ENCODE measurements at regions of chr4 and their contacts with region 1.

Region 1: DNA sequence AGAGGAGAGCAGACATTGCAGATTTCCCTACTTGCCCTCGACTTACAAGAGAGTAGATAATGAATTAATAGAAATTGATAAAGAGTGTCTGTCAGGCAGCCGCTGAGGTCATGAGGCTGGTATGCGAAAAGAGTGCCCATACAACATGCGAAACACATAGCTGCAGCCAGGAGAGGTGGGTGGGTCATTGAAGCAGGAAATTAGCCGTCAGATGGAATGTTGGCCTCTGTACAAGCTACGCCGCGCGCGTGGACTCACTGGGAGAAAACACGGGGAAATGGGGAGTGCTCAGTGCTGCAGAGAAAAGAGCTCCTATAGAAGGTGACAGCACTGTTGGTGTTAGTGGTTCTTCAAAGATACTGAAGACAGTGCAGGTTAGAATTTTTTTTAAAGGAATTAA is 125.1 kb downstream of the RAPGEF2 start:
- DNase-seq: peak; percentile 76 to 86
- H3K4me3 ChIP-seq: peak overlapping the region; percentile 8; the same call in 1 of the 2 replicates
- H3K4me3 Mint-ChIP-seq: peak overlapping the region; percentile 82
- H3K27ac Mint-ChIP-seq: peak overlapping the region; percentile 97
- H3K4me1 ChIP-seq: peaks cover 48% of the 10 kb centered on the region
- H3K4me1 Mint-ChIP-seq: peaks cover 28% of the 10 kb centered on the region
- H3K27me3 ChIP-seq: no peaks in the 10 kb centered on the region
- H3K27me3 Mint-ChIP-seq: no peaks in the 10 kb centered on the region
- CTCF ChIP-seq: no peak

Region 2: GRCh38 chr4:158722917-158723793 is 504.8 kb before region 1 on chr4 and contains the start of gene PPID:
- CTCF ChIA-PET with region 1: no interaction called
- POLR2A ChIA-PET with region 1: no interaction called
- intact Hi-C with region 1: loop called (anchors 2 kb)
- DNase-seq: peak; percentile 85 to 88
- H3K4me3 ChIP-seq: peak within 1 kb of the TSS; percentile 68
- H3K4me3 Mint-ChIP-seq: peak within 1 kb of the TSS; percentile 90
- H3K27ac Mint-ChIP-seq: peak within 1 kb of the TSS; percentile 95
- H3K4me1 ChIP-seq: peaks cover 6% of the 10 kb centered on the region
- H3K4me1 Mint-ChIP-seq: peaks cover 9% of the 10 kb centered on the region
- H3K27me3 ChIP-seq: no peaks in the 10 kb centered on the region
- H3K27me3 Mint-ChIP-seq: no peaks in the 10 kb centered on the region
- CTCF ChIP-seq: no peak
- total RNA-seq, gene PPID: 50.9 and 57.2 TPM in 2 replicates

Region 3: GRCh38 chr4:158991534-158992155 is 236.3 kb before region 1 on chr4:
- CTCF ChIA-PET with region 1: no interaction called
- POLR2A ChIA-PET with region 1: no interaction called
- intact Hi-C with region 1: no loop called
- DNase-seq: no peak
- H3K4me3 ChIP-seq: no peak overlapping the region
- H3K4me3 Mint-ChIP-seq: no peak overlapping the region
- H3K27ac Mint-ChIP-seq: no peak overlapping the region
- H3K4me1 ChIP-seq: no peaks in the 10 kb centered on the region
- H3K4me1 Mint-ChIP-seq: no peaks in the 10 kb centered on the region
- H3K27me3 ChIP-seq: no peaks in the 10 kb centered on the region
- H3K27me3 Mint-ChIP-seq: no peaks in the 10 kb centered on the region
- CTCF ChIP-seq: no peak

Region 4: DNA sequence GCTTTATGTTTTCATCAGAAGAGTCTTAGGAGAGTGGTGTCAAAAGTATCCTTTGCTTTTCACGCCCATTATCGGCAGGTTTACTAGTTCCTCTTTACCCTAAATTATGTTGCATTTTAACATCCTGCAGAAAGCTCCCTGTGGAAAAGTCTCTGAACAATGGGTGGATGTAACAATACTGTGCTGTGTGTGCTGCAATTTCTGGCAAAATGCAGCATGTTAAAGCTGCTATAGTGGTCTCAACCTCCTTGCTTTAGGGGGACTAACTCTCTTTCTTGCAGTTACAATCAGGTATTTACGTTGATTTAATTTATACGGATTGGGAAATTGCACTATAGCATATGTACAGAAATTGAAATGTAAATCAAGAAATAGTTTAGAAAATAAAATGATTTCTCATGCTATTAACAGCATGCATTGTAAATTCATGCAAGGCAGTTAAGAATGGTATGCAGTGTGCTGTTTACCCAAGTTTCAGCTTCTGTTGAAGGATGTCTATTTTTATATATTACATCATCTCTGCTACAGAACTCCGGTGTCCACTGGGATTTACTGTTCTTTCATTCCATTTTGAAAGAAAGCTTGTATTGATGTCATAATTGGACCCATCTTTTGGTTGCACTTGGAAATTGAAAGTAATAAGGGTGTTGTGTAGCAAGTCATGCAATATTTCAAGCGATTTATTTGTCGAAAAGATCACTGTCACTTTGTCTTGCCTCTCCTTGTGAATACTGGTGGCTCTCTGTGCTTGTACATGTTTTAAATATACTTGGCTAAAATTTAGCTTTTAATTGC is 20.6 kb after region 1 on chr4:
- CTCF ChIA-PET with region 1: no interaction called
- POLR2A ChIA-PET with region 1: no interaction called
- intact Hi-C with region 1: loop called (anchors 1 kb)
- DNase-seq: peak in 1 of 2 experiments; percentile 16
- H3K4me3 ChIP-seq: no peak overlapping the region
- H3K4me3 Mint-ChIP-seq: no peak overlapping the region
- H3K27ac Mint-ChIP-seq: peak overlapping the region; percentile 36
- H3K4me1 ChIP-seq: peaks cover 8% of the 10 kb centered on the region
- H3K4me1 Mint-ChIP-seq: peaks cover 11% of the 10 kb centered on the region
- H3K27me3 ChIP-seq: no peaks in the 10 kb centered on the region
- H3K27me3 Mint-ChIP-seq: no peaks in the 10 kb centered on the region
- CTCF ChIP-seq: no peak

Region 5: DNA sequence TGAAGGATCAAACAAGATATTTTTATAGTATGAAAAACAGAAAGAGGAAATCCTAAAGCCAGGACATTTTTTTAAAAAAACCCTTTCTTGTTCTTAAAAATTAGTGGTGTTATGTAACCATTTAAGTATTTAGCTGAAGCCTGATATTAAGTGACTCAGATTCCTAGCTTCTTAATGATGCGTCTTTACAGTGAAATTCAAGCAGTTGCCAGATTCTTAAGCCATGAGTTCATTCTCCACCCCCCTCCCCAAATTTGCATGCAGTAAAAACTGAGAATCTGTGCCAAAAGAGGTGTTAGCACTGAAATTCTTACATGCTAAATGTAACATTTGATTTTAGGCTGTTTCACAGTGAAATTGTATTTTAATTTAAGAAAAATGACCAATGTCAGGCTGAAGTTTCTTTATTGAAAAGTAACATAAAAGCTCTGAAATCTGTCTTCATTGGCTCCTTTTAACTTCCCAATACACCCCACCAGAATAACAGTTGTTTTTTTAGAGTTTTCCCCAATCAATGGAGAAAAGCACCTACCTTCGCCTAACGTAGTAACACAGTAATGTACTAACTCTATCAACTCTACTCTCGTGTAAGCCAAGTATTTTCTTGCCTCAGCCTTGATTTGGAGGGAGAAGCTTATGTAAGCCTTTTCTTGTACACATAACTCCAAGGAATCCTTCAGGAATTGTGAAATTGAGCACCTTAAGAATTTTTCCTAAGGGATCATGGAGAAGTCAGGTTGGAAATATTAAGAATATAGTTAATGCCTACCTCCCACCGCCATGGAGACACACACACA is 55.9 kb after region 1 on chr4:
- CTCF ChIA-PET with region 1: no interaction called
- POLR2A ChIA-PET with region 1: interaction called, 3 read pairs
- intact Hi-C with region 1: loop called (anchors 5 kb)
- DNase-seq: no peak
- H3K4me3 ChIP-seq: no peak overlapping the region
- H3K4me3 Mint-ChIP-seq: no peak overlapping the region
- H3K27ac Mint-ChIP-seq: no peak overlapping the region
- H3K4me1 ChIP-seq: peaks cover 43% of the 10 kb centered on the region
- H3K4me1 Mint-ChIP-seq: peaks cover 5% of the 10 kb centered on the region
- H3K27me3 ChIP-seq: no peaks in the 10 kb centered on the region
- H3K27me3 Mint-ChIP-seq: no peaks in the 10 kb centered on the region
- CTCF ChIP-seq: no peak

Region 6: DNA sequence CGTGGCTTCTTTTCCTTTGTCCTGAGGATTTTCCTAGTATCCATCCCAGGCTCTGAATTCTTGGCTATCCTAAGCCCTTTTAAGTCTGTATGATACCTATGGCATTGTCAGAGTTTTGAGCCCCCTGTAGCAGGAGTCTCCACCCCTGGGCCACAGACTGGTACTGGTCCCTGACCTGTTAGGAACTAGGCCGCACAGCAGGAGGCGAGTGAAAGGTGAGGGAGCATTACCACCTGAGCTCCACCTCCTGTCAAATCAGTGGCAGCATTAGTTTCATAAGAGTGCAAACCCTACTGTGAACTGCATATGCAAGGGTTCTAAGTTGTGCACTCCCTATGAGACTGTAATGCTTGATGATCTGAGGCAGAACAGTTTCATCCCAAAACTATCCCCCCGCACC is 91.0 kb after region 1 on chr4:
- CTCF ChIA-PET with region 1: no interaction called
- POLR2A ChIA-PET with region 1: no interaction called
- intact Hi-C with region 1: loop called (anchors 5 kb)
- DNase-seq: no peak
- H3K4me3 ChIP-seq: no peak overlapping the region
- H3K4me3 Mint-ChIP-seq: no peak overlapping the region
- H3K27ac Mint-ChIP-seq: no peak overlapping the region
- H3K4me1 ChIP-seq: no peaks in the 10 kb centered on the region
- H3K4me1 Mint-ChIP-seq: peaks cover 7% of the 10 kb centered on the region
- H3K27me3 ChIP-seq: no peaks in the 10 kb centered on the region
- H3K27me3 Mint-ChIP-seq: no peaks in the 10 kb centered on the region
- CTCF ChIP-seq: no peak